ENCODE measurements at regions of chr7 and their contacts with region 1.

Region 1: GRCh38 chr7:112869111-112869757 is 79.0 kb upstream of the TMEM168 start:
- DNase-seq: peak; percentile 1
- H3K4me3 ChIP-seq: no peak overlapping the region
- H3K27ac ChIP-seq: no peak overlapping the region
- H3K27me3 ChIP-seq: no peaks in the 10 kb centered on the region
- CTCF ChIP-seq: peak; percentile 81

Region 2: DNA sequence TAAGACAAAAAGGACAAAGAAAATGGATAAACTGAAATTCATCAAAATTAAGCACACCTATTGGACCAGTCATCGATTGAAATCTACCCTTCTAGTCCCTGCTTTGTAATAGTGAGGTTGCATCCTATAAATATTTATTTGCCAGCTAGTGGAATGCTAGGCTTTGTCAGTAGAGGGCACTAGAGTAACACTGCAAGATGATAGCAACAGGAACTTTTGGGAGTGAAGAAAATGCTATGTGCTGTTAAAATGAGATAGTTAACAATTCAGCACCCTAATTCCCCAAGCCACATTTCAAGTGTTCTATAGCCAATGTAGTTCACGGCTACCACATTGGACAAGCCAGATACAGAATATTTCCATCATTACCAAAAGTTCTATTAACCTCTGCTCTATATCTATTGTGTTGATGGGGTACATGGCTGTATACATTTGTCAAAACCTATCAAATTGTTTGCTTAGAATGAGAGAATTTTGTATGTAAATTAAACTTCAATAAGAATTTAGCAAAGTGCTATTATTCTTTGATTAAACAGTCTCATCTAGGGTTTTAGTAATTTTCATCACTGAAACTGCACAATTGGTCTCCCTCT is 318.7 kb before region 1 on chr7:
- CTCF ChIA-PET with region 1: interaction called, 12 read pairs
- POLR2A ChIA-PET with region 1: no interaction called
- DNase-seq: peak; percentile 24
- H3K4me3 ChIP-seq: no peak overlapping the region
- H3K27ac ChIP-seq: no peak overlapping the region
- H3K27me3 ChIP-seq: no peaks in the 10 kb centered on the region
- CTCF ChIP-seq: peak; percentile 98

Region 3: GRCh38 chr7:112853422-112853821 is 15.8 kb before region 1 on chr7:
- CTCF ChIA-PET with region 1: interaction called, 10 read pairs
- POLR2A ChIA-PET with region 1: no interaction called
- DNase-seq: no peak
- H3K4me3 ChIP-seq: no peak overlapping the region
- H3K27ac ChIP-seq: no peak overlapping the region
- H3K27me3 ChIP-seq: no peaks in the 10 kb centered on the region
- CTCF ChIP-seq: no peak

Region 4: DNA sequence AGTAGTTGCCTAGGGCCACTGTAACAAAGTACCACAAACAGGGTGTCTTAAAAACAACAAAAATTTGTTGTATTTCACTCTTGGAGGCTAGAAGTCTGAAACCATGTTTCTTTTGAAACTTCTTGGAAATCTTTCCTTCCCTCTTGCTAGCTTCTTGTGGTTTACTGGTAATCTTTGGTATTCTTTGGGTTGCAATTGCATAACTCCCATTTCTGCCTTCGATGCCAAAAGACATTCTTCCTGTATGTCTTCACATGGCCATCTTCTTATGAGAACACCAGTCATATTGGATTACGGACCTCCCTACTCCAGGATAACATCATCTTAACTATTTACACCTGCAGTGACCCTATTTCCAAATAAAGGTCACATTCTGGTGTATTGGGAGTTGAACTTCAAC is 692.2 kb after region 1 on chr7:
- CTCF ChIA-PET with region 1: no interaction called
- POLR2A ChIA-PET with region 1: no interaction called
- DNase-seq: peak; percentile 16
- H3K4me3 ChIP-seq: no peak overlapping the region
- H3K27ac ChIP-seq: no peak overlapping the region
- H3K27me3 ChIP-seq: no peaks in the 10 kb centered on the region
- CTCF ChIP-seq: no peak